Heart left ventricle (tissue), 16 donors: ENCODE measurements at regions of chr11 and their contacts with region 1.

Region 1: DNA sequence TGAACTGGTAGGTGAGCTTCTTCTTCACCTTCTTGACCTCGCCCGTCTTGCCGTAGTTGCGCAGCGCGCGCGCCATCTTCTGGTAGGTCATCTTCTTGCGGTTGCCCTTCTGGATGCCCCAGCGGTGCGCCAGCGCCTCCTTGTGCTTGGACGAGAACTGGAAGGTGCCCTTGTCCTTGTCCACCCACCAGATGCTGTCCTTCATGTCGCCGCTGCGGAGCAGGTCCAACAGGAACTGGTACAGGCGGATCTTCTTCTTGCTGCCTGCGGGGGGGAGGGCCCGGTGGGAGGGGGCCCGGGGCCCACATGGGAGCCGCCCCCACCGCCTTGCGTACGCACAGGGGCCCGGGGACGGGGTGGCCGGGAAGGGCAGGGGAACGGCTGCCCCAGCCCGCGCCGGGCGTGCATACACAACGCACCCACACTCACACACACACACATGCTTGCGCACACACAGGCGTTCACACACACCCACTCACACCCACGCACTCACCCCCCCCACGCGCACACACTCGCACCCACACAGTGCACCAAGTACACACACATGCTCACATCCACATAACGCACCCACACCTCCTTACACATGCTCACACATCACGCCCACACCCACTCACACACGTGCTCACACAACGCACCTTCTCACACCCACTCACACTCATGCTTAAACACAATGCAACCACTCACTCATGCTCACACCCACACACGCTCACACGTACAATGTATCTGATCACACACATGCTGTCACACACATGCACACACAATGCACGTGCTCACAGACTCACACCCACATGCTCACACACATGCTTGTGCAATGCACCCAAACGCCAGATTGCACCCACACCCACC is 3.0 kb upstream of the MYBPC3 start:
- DNase-seq: peak; percentile 93 to 97 (median 96)
- ATAC-seq: peak; percentile 4 to 60 (median 42)
- H3K4me3 ChIP-seq: peak overlapping the region; percentile 18 to 72 (median 50)
- H3K27ac ChIP-seq: peak overlapping the region; percentile 70 to 99 (median 93)
- H3K4me1 ChIP-seq: peaks cover 0 to 37% (median 7%) of the 10 kb centered on the region in 12 donors
- H3K27me3 ChIP-seq: no peaks in the 10 kb centered on the region
- CTCF ChIP-seq: peak; percentile 79 to 99 (median 94)
- POLR2A ChIP-seq: no peak

Region 2: DNA sequence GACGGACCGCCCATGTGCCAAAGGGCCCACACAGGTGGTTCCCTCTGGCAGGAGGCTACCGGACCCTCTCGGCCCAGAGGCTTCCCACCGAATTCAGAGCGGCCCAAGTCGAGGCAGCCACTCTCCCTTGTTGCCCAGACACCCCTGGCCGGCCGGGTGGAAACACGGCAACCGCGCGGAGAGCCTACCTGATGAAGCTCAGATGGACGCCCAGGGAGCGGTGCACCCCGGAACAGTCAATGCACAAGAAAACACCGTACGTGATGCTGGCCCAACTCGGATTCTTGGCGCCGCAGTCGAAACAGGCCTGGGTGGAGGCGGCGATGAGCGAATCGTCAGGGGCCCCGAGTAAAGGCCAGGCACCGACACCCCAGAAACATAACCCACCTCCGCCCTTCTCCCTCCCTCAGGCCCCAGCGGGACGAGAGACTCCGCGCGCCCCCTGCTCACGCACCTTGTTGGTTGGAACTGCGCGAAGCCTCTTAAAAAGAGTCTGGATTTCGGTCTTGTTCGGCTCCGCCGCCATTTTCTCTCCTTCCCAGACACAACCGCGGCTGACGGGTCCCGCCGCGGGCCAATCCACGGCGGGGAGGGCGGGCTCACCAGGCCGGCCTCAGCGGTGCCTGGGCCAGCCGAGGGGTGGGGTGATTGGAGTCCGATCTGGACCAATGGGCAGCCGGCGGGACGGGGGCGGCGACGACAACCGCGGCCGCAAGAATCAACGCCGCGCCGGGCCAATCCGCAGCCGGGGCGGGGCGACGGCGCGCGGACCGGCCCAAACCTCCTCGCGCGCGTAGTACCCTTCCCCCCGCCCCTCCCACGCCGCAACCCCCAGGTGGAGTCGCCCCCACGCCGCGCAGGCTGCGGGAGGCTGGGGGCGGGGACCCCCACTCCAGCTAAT is 178.9 kb before region 1 on chr11 and contains the start of gene ARFGAP2:
- intact Hi-C with region 1: loop called in 8 of 10 experiments (anchors 1 to 5 kb)
- DNase-seq: peak; percentile 98
- ATAC-seq: peak; percentile 86 to 94 (median 91)
- H3K4me3 ChIP-seq: peak within 1 kb of the TSS; percentile 67 to 100 (median 94)
- H3K27ac ChIP-seq: peak within 1 kb of the TSS; percentile 92 to 100 (median 98)
- H3K4me1 ChIP-seq: peaks cover 11 to 89% (median 60%) of the 10 kb centered on the region in 12 donors
- H3K27me3 ChIP-seq: no peaks in the 10 kb centered on the region
- CTCF ChIP-seq: no peak
- POLR2A ChIP-seq: peak in 1 of 2 donors; percentile 69
- total RNA-seq, gene ARFGAP2: 47.5 to 96.1 (median 61.3) TPM

Region 3: GRCh38 chr11:47233989-47234668 is 121.4 kb before region 1 on chr11:
- intact Hi-C with region 1: loop called in 3 of 10 experiments (anchors 1 to 10 kb)
- DNase-seq: peak; percentile 24 to 54 (median 47)
- ATAC-seq: peak; percentile 34 to 77 (median 69)
- H3K4me3 ChIP-seq: no peak overlapping the region
- H3K27ac ChIP-seq: peak overlapping the region in 10 of 12 donors; percentile 6 to 73 (median 37)
- H3K4me1 ChIP-seq: peaks cover 0 to 32% (median 10%) of the 10 kb centered on the region in 12 donors
- H3K27me3 ChIP-seq: no peaks in the 10 kb centered on the region
- CTCF ChIP-seq: peak in 11 of 12 donors; percentile 19 to 59 (median 36)
- POLR2A ChIP-seq: no peak

Region 4: GRCh38 chr11:47269002-47269828 is 86.3 kb before region 1 on chr11:
- intact Hi-C with region 1: loop called in 6 of 10 experiments (anchors 2 to 5 kb)
- DNase-seq: peak; percentile 91 to 95 (median 94)
- ATAC-seq: peak; percentile 70 to 92 (median 90)
- H3K4me3 ChIP-seq: peak overlapping the region; percentile 44 to 95 (median 84)
- H3K27ac ChIP-seq: peak overlapping the region; percentile 92 to 99 (median 98)
- H3K4me1 ChIP-seq: peaks cover 0 to 58% (median 40%) of the 10 kb centered on the region in 12 donors
- H3K27me3 ChIP-seq: no peaks in the 10 kb centered on the region
- CTCF ChIP-seq: peak in 3 of 12 donors; percentile 18 to 32 (median 31)
- POLR2A ChIP-seq: peak in 1 of 2 donors; percentile 0